CD4-positive, alpha-beta memory T cell (primary cell): ENCODE measurements at regions of chr12 and their contacts with region 1.

Region 1: DNA sequence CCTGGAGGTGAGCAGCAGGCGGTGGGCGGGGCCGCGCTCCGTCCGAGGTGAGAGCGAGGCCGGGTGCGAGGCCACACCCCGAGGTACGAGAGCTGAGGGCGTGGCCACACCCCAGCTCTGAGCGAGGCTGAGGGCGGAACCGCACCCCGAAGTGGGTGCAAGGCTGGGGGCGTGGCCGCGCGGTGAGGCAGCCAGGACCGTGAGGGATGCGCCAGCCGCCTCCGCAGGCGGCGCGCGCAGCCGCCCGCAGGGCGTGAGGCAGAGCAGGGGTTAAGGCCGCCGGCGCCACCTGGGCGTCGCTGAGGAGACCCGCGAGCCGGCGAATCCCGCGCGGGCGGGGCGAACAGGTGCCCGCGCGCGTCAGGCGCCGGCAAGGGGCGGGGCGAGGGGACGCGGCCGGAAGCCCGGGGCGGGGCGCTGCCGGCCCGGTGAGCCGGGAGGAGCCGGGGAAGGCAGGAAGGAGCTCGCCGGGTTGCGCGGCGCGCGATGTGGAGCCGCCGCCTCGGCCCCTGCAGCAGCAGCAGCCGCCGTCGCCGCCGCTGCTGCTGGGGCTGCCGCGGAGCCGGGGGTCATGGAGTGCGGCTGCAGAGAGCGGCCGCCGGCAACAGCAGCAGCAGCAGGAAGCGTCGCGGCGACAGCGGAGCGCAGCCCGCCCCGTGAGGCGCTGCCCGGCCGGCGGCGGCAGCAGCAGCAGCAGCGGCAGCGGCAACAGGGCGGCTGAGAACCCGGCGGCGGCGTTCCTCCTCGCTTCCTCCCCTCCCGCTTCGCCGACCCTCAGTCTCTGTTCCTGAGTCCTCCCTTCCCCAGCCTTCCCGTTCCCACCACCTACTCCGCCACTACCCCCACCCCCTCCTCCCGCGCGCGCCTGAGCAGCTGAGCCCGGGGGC is at the start of gene BICDL1:
- DNase-seq: peak; percentile 98 to 99 (median 99)
- H3K4me3 ChIP-seq: peak within 1 kb of the TSS; percentile 60 to 78
- H3K4me3 Mint-ChIP-seq: peak within 1 kb of the TSS; percentile 85 to 95 (median 87)
- H3K27ac ChIP-seq: peak within 1 kb of the TSS; percentile 77
- H3K27ac Mint-ChIP-seq: peak within 1 kb of the TSS; percentile 95 to 99 (median 98)
- H3K4me1 ChIP-seq: peaks cover 36% of the 10 kb centered on the region
- H3K4me1 Mint-ChIP-seq: peaks cover 26 to 41% (median 32%) of the 10 kb centered on the region in 4 donors
- H3K27me3 ChIP-seq: no peaks in the 10 kb centered on the region
- H3K27me3 Mint-ChIP-seq: no peaks in the 10 kb centered on the region
- total RNA-seq, gene BICDL1: 143 to 153 TPM

Region 2: DNA sequence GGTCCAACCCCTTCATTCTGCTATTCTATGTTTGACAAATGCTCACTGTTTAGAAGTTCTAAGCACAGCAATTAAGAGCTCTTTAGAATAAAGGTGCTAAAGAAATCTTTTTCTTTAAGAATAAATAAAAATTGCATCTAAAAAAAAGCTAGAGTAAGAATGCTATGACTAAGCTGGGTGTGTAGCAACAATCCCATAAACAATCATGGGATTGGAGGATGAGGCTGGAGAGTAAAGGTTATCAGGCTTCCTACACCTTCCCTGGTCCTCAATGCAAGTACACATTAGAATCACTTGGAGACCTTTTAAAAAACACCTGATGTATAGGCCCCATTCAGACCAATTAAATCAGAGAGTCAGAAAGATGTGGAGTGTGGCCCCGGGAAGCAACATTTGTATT is 200.2 kb before region 1 on chr12:
- CTCF ChIA-PET with region 1: no interaction called
- POLR2A ChIA-PET with region 1: no interaction called
- intact Hi-C with region 1: no loop called
- DNase-seq: no peak
- H3K4me3 ChIP-seq: no peak overlapping the region
- H3K4me3 Mint-ChIP-seq: no peak overlapping the region
- H3K27ac ChIP-seq: no peak overlapping the region
- H3K27ac Mint-ChIP-seq: peak overlapping the region in 1 of 7 donors; percentile 48
- H3K4me1 ChIP-seq: no peaks in the 10 kb centered on the region
- H3K4me1 Mint-ChIP-seq: peaks cover 0 to 5% (median 0%) of the 10 kb centered on the region in 4 donors
- H3K27me3 ChIP-seq: no peaks in the 10 kb centered on the region
- H3K27me3 Mint-ChIP-seq: no peaks in the 10 kb centered on the region

Region 3: GRCh38 chr12:119902084-119902509 is 86.9 kb before region 1 on chr12:
- CTCF ChIA-PET with region 1: no interaction called
- POLR2A ChIA-PET with region 1: no interaction called
- intact Hi-C with region 1: loop called (anchors 10 kb)
- DNase-seq: peak; percentile 61 to 76 (median 67)
- H3K4me3 ChIP-seq: no peak overlapping the region
- H3K4me3 Mint-ChIP-seq: no peak overlapping the region
- H3K27ac ChIP-seq: no peak overlapping the region
- H3K27ac Mint-ChIP-seq: no peak overlapping the region
- H3K4me1 ChIP-seq: no peaks in the 10 kb centered on the region
- H3K4me1 Mint-ChIP-seq: peaks cover 4 to 7% (median 5%) of the 10 kb centered on the region in 4 donors
- H3K27me3 ChIP-seq: no peaks in the 10 kb centered on the region
- H3K27me3 Mint-ChIP-seq: peaks cover 0 to 4% of the 10 kb centered on the region in 2 donors

Region 4: GRCh38 chr12:120012067-120012621 is 23.1 kb after region 1 on chr12:
- CTCF ChIA-PET with region 1: interaction called, 16 read pairs
- POLR2A ChIA-PET with region 1: interaction called, 236 read pairs
- intact Hi-C with region 1: loop called (anchors 1 kb)
- DNase-seq: peak; percentile 82 to 99 (median 88)
- H3K4me3 ChIP-seq: peak overlapping the region; percentile 1 to 22
- H3K4me3 Mint-ChIP-seq: peak overlapping the region; percentile 63 to 89 (median 80)
- H3K27ac ChIP-seq: peak overlapping the region; percentile 95
- H3K27ac Mint-ChIP-seq: peak overlapping the region; percentile 95 to 100 (median 99)
- H3K4me1 ChIP-seq: peaks cover 81% of the 10 kb centered on the region
- H3K4me1 Mint-ChIP-seq: peaks cover 58 to 88% (median 67%) of the 10 kb centered on the region in 4 donors
- H3K27me3 ChIP-seq: no peaks in the 10 kb centered on the region
- H3K27me3 Mint-ChIP-seq: no peaks in the 10 kb centered on the region

Region 5: DNA sequence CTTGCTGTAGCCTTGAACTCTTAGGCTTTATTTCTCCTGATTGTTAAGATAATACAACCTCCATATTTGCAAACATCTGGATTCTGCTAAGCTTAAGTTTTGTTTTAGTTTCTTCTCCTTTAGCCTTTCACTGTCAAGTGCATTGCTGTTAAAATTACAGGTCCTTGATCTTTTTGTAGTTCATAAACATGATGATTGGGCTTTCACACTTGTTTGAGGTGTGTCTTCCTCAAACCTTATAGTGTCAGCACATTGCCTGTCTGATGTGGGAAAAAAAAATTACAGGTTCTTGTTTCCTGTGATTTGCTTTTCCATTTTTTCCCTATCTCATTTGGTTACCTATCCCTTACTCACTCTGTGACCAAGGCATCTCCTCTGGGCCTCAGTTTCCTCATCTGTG is 59.2 kb after region 1 on chr12:
- CTCF ChIA-PET with region 1: interaction called, 4 read pairs
- POLR2A ChIA-PET with region 1: interaction called, 27 read pairs
- intact Hi-C with region 1: no loop called
- DNase-seq: peak in 4 of 5 donors; percentile 9 to 33 (median 14)
- H3K4me3 ChIP-seq: no peak overlapping the region
- H3K4me3 Mint-ChIP-seq: peak overlapping the region in 6 of 8 donors; percentile 5 to 64 (median 53)
- H3K27ac ChIP-seq: peak overlapping the region; percentile 37
- H3K27ac Mint-ChIP-seq: peak overlapping the region; percentile 77 to 94 (median 90)
- H3K4me1 ChIP-seq: peaks cover 35% of the 10 kb centered on the region
- H3K4me1 Mint-ChIP-seq: peaks cover 28 to 40% (median 35%) of the 10 kb centered on the region in 4 donors
- H3K27me3 ChIP-seq: no peaks in the 10 kb centered on the region
- H3K27me3 Mint-ChIP-seq: no peaks in the 10 kb centered on the region

Region 6: GRCh38 chr12:120110550-120111501 is 121.8 kb after region 1 on chr12:
- CTCF ChIA-PET with region 1: no interaction called
- POLR2A ChIA-PET with region 1: interaction called, 14 read pairs
- intact Hi-C with region 1: no loop called
- DNase-seq: peak; percentile 49 to 70 (median 61)
- H3K4me3 ChIP-seq: peak overlapping the region in 1 of 2 donors; percentile 45
- H3K4me3 Mint-ChIP-seq: peak overlapping the region; percentile 33 to 85 (median 80)
- H3K27ac ChIP-seq: peak overlapping the region; percentile 56
- H3K27ac Mint-ChIP-seq: peak overlapping the region; percentile 69 to 94 (median 78)
- H3K4me1 ChIP-seq: peaks cover 76% of the 10 kb centered on the region
- H3K4me1 Mint-ChIP-seq: peaks cover 52 to 87% (median 67%) of the 10 kb centered on the region in 4 donors
- H3K27me3 ChIP-seq: no peaks in the 10 kb centered on the region
- H3K27me3 Mint-ChIP-seq: no peaks in the 10 kb centered on the region

Region 7: DNA sequence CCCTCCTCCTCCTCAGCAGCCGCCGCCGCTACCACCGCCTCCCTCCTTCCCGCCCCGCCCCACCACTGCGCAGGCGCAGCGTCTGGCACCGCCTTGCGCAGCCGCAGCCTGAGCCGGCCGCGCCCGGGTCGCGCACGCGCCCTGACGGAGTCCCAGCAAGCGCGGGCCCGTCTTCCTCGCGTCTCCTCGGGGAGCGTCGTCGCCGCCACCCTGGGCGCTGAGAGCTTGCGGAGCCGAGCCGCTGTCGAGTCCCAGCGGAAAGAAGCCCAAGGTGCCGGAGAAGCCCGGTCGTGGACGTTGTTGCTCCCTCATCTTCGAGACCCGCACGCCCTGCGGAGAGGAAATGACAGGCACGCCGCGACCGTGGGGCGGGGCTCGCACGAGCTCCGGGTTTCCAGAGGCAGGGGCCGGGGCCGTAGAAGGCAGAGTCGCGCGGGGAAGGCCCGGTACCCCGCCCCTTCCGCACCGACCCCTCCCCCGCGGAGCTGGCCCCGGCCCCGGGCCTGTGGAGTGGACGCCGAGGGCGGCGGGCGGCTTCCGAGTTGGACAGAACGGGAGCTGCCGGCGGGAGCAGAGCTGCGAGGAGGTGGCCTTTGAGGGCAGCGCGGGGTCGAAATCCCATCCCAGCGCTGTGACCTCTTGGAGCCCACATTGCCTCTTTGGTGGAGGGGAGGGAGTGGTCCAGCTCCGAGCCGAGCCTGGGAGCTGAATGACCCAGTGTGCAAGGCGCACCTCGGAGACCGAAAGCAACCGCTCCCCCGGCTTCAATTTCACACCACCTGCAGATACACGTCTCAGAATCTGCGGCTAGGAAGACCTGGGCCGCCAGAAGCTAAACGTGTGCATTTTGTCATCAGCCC is 128.0 kb after region 1 on chr12:
- CTCF ChIA-PET with region 1: interaction called, 3 read pairs
- POLR2A ChIA-PET with region 1: interaction called, 32 read pairs
- intact Hi-C with region 1: loop called (anchors 1 kb)
- DNase-seq: peak; percentile 95 to 99 (median 97)
- H3K4me3 ChIP-seq: peak overlapping the region; percentile 75 to 80
- H3K4me3 Mint-ChIP-seq: peak overlapping the region; percentile 86 to 98 (median 90)
- H3K27ac ChIP-seq: peak overlapping the region; percentile 83
- H3K27ac Mint-ChIP-seq: peak overlapping the region; percentile 85 to 99 (median 94)
- H3K4me1 ChIP-seq: peaks cover 84% of the 10 kb centered on the region
- H3K4me1 Mint-ChIP-seq: peaks cover 59 to 88% (median 76%) of the 10 kb centered on the region in 4 donors
- H3K27me3 ChIP-seq: no peaks in the 10 kb centered on the region
- H3K27me3 Mint-ChIP-seq: no peaks in the 10 kb centered on the region

Region 8: GRCh38 chr12:120200364-120200800 is 211.4 kb after region 1 on chr12:
- CTCF ChIA-PET with region 1: interaction called, 4 read pairs
- POLR2A ChIA-PET with region 1: interaction called, 12 read pairs
- intact Hi-C with region 1: loop called (anchors 1 kb)
- DNase-seq: peak in 1 of 5 donors; percentile 19
- H3K4me3 ChIP-seq: peak overlapping the region; percentile 80 to 91
- H3K4me3 Mint-ChIP-seq: peak overlapping the region; percentile 93 to 99 (median 98)
- H3K27ac ChIP-seq: peak overlapping the region; percentile 84
- H3K27ac Mint-ChIP-seq: peak overlapping the region; percentile 93 to 99 (median 98)
- H3K4me1 ChIP-seq: peaks cover 42% of the 10 kb centered on the region
- H3K4me1 Mint-ChIP-seq: peaks cover 23 to 60% (median 36%) of the 10 kb centered on the region in 4 donors
- H3K27me3 ChIP-seq: no peaks in the 10 kb centered on the region
- H3K27me3 Mint-ChIP-seq: no peaks in the 10 kb centered on the region